Head of caudate nucleus (tissue), 42 donors: ENCODE measurements at regions of chr11 and their contacts with region 1.

Region 1: GRCh38 chr11:47248664-47249377 is at the start of gene ACP2:
- DNase-seq: peak; percentile 87 to 97 (median 92)

Region 2: DNA sequence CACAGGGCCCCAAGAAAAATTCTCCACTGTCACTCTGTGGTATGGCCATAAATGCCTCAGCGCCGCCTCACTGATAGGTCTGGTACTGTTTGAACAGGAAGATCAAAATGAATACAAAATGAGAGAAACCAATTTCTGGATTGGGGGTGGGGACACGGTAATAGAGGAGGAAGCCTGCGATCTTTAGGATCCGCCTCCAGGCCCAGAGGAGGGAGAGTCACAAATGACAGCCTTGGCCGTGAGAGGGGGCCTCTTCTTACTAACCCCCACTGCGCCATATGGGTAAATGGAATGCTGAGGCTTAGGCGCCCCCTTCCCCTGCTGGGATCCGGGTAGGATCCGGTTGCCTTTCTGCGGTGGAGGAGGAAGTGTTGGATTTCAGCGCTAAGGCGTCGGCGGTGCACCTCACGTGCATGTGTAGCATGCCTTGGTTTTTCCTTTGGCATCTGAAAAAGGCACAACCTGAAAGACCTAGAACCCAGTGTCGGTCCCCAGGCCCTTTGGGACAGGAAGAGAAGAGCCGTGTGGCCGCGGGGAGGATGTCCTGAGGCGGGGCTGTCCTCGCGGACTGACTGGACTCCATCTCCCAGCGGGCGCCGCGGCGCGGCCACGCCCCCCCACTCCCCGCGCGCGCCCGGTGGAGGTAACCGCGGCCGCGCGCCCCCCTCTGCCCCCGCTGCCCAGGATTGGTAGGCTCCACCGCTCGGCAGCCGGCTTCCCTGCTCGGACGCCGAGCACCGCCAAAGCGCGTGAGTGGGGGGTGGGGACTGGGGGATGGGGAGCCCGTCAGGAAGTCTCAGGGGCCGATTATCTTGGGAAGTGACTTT is 20.4 kb after region 1 on chr11:
- intact Hi-C with region 1: loop called (anchors 2 kb)
- DNase-seq: peak; percentile 73 to 95 (median 88)